ENCODE measurements at regions of chr18 and their contacts with region 1.

Region 1: DNA sequence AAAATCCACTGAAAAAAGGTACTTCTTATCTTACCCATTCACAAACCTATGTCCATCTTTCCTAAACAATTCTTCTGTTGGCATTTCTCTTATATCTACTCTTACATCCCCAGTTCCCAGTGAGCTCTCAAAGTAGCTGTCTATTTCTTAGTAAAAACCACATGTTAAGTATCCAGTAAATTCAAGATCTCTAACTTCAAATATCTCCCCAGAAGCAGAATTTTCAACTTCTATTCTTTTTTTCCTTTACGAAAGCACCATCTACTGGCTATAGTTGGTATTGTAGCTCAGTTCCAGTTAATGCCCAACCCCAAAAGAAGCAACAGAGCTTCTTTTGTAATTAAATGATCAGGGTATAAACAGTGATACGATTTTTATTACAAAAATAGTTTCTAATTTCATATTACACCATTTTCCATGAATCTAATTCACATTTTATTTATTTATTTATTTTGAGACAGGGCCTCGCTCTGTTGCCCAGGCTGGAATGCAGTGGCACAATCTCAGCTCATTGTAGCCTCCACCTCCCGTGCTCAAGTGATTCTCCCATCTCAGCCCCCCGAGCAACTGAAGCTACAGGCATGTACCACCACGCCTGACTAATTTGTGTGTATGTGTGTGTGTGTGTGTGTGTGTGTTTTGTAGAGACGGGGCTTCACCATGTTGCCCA is 28.5 kb downstream of the HRH4 start:
- DNase-seq: no peak
- ATAC-seq: peak; percentile 66
- H3K4me3 ChIP-seq: no peak overlapping the region
- H3K27ac ChIP-seq: no peak overlapping the region
- H3K4me1 ChIP-seq: peaks cover 3% of the 10 kb centered on the region
- H3K27me3 ChIP-seq: no peaks in the 10 kb centered on the region
- CTCF ChIP-seq: peak; percentile 86

Region 2: GRCh38 chr18:24362758-24363157 is 126.2 kb before region 1 on chr18:
- intact Hi-C with region 1: loop called (anchors 5 kb)
- DNase-seq: no peak
- ATAC-seq: no peak
- H3K4me3 ChIP-seq: no peak overlapping the region
- H3K27ac ChIP-seq: no peak overlapping the region
- H3K4me1 ChIP-seq: no peaks in the 10 kb centered on the region
- H3K27me3 ChIP-seq: no peaks in the 10 kb centered on the region
- CTCF ChIP-seq: no peak

Measured in upper lobe of right lung (tissue), 1 donor.